Activated CD4-positive, alpha-beta T cell treated with anti-CD3 and anti-CD28 coated beads for 36 hours (primary cell): ENCODE measurements at regions of chr17 and their contacts with region 1.

Region 1: GRCh38 chr17:21284319-21285163 is at the start of gene MAP2K3:
- DNase-seq: peak; percentile 99
- ATAC-seq: peak; percentile 76
- H3K4me3 Mint-ChIP-seq: peak within 1 kb of the TSS; percentile 98
- H3K27ac Mint-ChIP-seq: peak within 1 kb of the TSS; percentile 94
- H3K4me1 Mint-ChIP-seq: peaks cover 57% of the 10 kb centered on the region
- H3K27me3 Mint-ChIP-seq: no peaks in the 10 kb centered on the region
- total RNA-seq, gene MAP2K3: 122 to 123 TPM

Region 2: GRCh38 chr17:21126645-21127510 is 157.7 kb before region 1 on chr17 and contains the start of gene DHRS7B:
- CTCF ChIA-PET with region 1: no interaction called
- POLR2A ChIA-PET with region 1: interaction called, 7 read pairs
- intact Hi-C with region 1: loop called (anchors 1 kb)
- DNase-seq: peak; percentile 98
- ATAC-seq: peak; percentile 96
- H3K4me3 Mint-ChIP-seq: peak within 1 kb of the TSS; percentile 91
- H3K27ac Mint-ChIP-seq: peak within 1 kb of the TSS; percentile 98
- H3K4me1 Mint-ChIP-seq: peaks cover 23% of the 10 kb centered on the region
- H3K27me3 Mint-ChIP-seq: no peaks in the 10 kb centered on the region
- total RNA-seq, gene DHRS7B: 12.8 to 15.0 TPM

Region 3: DNA sequence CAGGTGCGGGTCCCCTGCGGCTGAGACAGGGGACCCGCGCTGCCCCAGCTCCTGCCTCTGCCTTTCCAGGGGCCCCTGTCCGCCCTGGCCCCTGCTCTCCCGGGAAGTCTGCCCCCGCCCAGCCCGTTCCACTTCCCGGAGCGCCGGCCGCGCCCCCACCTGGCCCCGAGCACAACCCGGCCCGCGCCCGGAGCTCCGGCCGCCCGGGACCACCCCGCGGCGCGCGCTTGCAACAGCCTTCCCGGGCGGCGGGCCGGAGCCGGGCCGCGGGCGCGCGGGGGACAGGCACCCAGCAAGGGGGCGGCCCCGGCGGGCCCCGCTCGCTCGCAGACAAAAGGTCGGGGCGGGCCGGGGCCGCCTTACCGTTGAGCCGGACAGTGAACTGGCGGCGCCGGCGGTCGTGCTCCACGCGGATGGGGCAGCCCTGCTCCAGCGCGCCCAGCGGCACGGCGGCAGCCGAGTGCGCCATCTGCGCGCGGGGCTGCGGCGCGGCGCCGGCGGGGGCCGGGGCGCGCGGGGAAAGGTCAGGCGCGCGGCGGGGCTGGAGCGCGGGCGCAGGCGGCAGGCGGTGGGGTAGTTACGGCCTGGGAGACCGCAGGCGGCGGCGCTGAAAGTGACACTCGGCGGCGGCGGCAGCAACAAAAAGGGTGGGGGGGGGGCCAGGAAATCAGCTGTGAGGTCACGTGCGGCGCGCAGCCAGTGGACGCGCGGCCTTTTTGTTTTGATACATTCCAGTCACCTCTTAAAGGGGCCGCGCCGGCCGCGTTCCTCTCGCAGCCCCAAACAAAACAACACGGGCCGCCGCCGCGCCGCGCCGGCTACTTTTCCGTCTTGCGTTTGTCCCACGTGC is 31.5 kb before region 1 on chr17 and contains the start of gene NATD1:
- CTCF ChIA-PET with region 1: interaction called, 9 read pairs
- POLR2A ChIA-PET with region 1: no interaction called
- intact Hi-C with region 1: loop called (anchors 1 kb)
- DNase-seq: peak; percentile 86
- ATAC-seq: peak; percentile 71
- H3K4me3 Mint-ChIP-seq: peak within 1 kb of the TSS; percentile 77
- H3K27ac Mint-ChIP-seq: peak within 1 kb of the TSS; percentile 47
- H3K4me1 Mint-ChIP-seq: peaks cover 6% of the 10 kb centered on the region
- H3K27me3 Mint-ChIP-seq: no peaks in the 10 kb centered on the region
- total RNA-seq, gene NATD1: 1.5 to 1.7 TPM

Region 4: GRCh38 chr17:21457051-21458026 is 172.8 kb after region 1 on chr17:
- CTCF ChIA-PET with region 1: interaction called, 9 read pairs
- POLR2A ChIA-PET with region 1: no interaction called
- intact Hi-C with region 1: loop called (anchors 1 to 2 kb)
- DNase-seq: peak; percentile 96
- ATAC-seq: peak; percentile 92
- H3K4me3 Mint-ChIP-seq: no peak overlapping the region
- H3K27ac Mint-ChIP-seq: peak overlapping the region; percentile 67
- H3K4me1 Mint-ChIP-seq: peaks cover 21% of the 10 kb centered on the region
- H3K27me3 Mint-ChIP-seq: peaks cover 15% of the 10 kb centered on the region

Region 5: DNA sequence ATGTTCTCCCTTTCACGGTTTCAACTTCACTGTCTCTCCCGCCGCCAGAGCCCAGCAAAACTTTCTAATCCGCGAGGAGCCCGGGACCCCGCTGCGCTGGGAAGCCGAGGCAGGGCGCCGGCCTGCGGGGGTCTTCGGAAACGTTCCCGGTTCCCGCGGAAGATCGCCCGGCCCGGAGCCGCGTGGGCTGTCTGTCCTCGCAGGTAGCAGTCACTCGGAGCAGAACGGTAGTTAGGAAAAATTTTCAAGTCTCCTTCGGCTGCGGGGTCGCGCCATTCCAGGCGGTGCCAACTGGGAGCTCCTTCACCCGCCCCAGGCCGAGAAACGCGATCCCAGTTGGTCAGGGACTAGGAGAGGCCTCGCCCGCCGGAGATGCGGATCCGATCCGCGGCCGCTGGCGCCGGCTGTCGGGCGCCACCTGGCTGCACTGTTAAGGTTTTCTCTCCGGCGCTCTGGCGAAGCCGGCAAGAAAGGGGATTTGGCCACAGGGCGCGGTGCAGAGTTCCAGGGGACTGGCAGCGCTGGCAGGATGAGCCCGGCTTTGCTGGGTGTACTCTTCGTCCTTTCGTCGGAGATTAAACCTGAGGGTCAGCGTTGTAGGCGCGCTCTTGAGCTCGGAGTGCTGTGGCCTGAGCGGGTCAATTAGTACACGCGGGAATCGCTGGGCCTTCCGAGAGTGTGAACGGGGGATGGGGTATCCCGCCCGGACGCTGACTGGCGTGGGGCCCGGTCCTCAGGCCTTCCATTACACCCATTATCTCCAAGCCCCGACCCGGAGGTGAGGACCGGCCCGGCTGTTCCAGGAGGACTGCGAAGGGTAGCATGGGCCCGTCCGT is 227.0 kb after region 1 on chr17:
- CTCF ChIA-PET with region 1: interaction called, 14 read pairs
- POLR2A ChIA-PET with region 1: no interaction called
- intact Hi-C with region 1: loop called (anchors 1 kb)
- DNase-seq: peak; percentile 82
- ATAC-seq: peak; percentile 87
- H3K4me3 Mint-ChIP-seq: peak overlapping the region; percentile 60
- H3K27ac Mint-ChIP-seq: no peak overlapping the region
- H3K4me1 Mint-ChIP-seq: peaks cover 14% of the 10 kb centered on the region
- H3K27me3 Mint-ChIP-seq: peaks cover 31% of the 10 kb centered on the region